ENCODE measurements at regions of chr6 and their contacts with region 1.

Region 1: GRCh38 chr6:33417903-33418689 is at the start of gene CUTA:
- DNase-seq: peak; percentile 98
- ATAC-seq: peak; percentile 91
- H3K4me3 Mint-ChIP-seq: peak within 1 kb of the TSS; percentile 96
- H3K27ac Mint-ChIP-seq: peak within 1 kb of the TSS; percentile 100
- H3K4me1 Mint-ChIP-seq: peaks cover 63% of the 10 kb centered on the region
- H3K27me3 Mint-ChIP-seq: no peaks in the 10 kb centered on the region; the same call in 1 of the 2 replicates
- CTCF ChIP-seq: peak; percentile 45
- total RNA-seq, gene CUTA: 229 to 247 TPM (median 243 TPM) in 3 replicates

Region 2: DNA sequence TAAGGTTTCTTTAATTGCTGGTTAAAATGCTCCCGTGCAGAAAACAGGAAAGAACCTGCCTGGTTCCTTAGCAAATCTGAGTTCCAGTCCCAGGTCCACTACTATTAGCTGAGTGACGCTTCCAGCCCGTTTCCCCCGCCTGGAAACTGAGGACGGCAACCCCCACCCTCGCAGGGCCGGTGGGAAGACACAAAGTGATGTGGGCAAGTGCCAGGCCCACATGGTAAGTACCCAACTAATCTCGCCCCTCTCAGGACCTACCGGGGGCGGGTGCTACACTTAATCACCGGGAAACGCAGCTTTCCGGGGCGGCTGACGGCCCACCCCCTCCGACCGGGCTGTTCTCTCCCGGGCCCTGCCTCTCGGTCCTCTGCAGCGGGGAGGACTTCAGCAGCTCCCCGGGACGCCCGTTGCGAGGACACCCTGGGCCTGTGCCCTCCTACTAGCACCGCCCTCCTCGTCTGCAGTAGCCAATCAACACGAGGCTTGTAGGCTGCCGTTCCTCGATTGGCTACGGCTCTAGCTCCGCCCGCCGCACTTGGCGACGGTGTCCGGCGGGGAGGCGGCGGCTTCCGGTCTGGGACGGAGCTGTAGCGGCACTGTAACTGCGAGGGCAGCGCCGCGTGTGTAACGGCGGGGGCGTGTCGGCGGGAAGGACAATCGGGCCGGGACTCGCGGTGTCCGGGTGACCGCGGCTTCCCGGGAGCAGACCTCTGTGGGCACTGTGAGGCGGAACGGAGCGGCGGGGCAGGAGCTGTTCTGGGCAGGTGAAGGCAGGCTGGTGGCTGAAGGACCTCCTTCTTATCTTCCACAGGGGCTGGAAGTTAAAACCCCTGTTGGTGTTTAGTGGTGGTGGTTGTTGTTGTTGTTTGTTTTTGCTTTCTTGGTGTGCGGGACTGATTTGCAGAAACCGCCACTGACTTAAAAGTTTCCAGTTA is 36.2 kb after region 1 on chr6 and contains the start of gene ZBTB9:
- CTCF ChIA-PET with region 1: interaction called, 12 read pairs
- POLR2A ChIA-PET with region 1: interaction called, 5 read pairs
- DNase-seq: peak; percentile 93
- ATAC-seq: peak; percentile 97
- H3K4me3 Mint-ChIP-seq: peak within 1 kb of the TSS; percentile 92
- H3K27ac Mint-ChIP-seq: peak within 1 kb of the TSS; percentile 77
- H3K4me1 Mint-ChIP-seq: peaks cover 17% of the 10 kb centered on the region
- H3K27me3 Mint-ChIP-seq: peaks cover 4% of the 10 kb centered on the region
- CTCF ChIP-seq: no peak
- total RNA-seq, gene ZBTB9: 19.4 to 21.2 TPM (median 20.8 TPM) in 3 replicates

Measured in WTC11 (cell line).